ENCODE measurements at regions of chr6 and their contacts with region 1.

Region 1: GRCh38 chr6:32483968-32484636 is 44.4 kb downstream of the HLA-DRA start:
- DNase-seq: no peak
- H3K4me3 ChIP-seq: no peak overlapping the region
- H3K27ac ChIP-seq: no peak overlapping the region
- H3K4me1 ChIP-seq: no peaks in the 10 kb centered on the region
- H3K27me3 ChIP-seq: peaks cover 0 to 10% (median 0%) of the 10 kb centered on the region in 4 donors
- CTCF ChIP-seq: no peak
- EP300 ChIP-seq: no peak
- POLR2A ChIP-seq: no peak

Region 2: GRCh38 chr6:32226434-32226833 is 257.7 kb before region 1 on chr6:
- intact Hi-C with region 1: no loop called
- DNase-seq: no peak
- H3K4me3 ChIP-seq: no peak overlapping the region
- H3K27ac ChIP-seq: no peak overlapping the region
- H3K4me1 ChIP-seq: peaks cover 0 to 3% (median 0%) of the 10 kb centered on the region in 4 donors
- H3K27me3 ChIP-seq: no peaks in the 10 kb centered on the region
- CTCF ChIP-seq: no peak
- EP300 ChIP-seq: no peak
- POLR2A ChIP-seq: no peak

Region 3: DNA sequence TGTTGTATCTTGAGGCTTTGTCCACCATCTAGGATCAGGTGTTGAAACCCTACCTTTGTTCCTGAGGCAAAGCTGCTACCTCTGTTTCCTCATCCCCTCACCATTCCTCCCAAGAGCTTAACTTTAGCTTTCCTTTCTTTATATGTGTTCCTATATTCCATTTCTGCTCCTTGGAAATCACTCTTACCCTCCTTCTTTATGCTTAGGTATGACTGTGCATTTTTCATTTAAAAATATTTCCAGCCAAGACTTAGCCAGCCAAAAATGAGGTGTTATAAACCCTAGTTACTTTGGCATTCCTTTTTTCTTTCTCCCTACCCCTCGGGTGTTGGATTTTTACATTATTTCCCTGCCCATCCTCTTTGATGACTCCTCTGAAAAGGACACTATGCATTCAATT is 170.1 kb before region 1 on chr6:
- intact Hi-C with region 1: no loop called
- DNase-seq: no peak
- H3K4me3 ChIP-seq: no peak overlapping the region
- H3K27ac ChIP-seq: no peak overlapping the region
- H3K4me1 ChIP-seq: no peaks in the 10 kb centered on the region
- H3K27me3 ChIP-seq: no peaks in the 10 kb centered on the region
- CTCF ChIP-seq: no peak
- EP300 ChIP-seq: no peak
- POLR2A ChIP-seq: no peak

Region 4: GRCh38 chr6:32576250-32576649 is 92.1 kb after region 1 on chr6:
- intact Hi-C with region 1: loop called (anchors 10 kb)
- DNase-seq: no peak
- H3K4me3 ChIP-seq: no peak overlapping the region
- H3K27ac ChIP-seq: no peak overlapping the region
- H3K4me1 ChIP-seq: no peaks in the 10 kb centered on the region
- H3K27me3 ChIP-seq: no peaks in the 10 kb centered on the region
- CTCF ChIP-seq: no peak
- EP300 ChIP-seq: no peak
- POLR2A ChIP-seq: no peak

Region 5: DNA sequence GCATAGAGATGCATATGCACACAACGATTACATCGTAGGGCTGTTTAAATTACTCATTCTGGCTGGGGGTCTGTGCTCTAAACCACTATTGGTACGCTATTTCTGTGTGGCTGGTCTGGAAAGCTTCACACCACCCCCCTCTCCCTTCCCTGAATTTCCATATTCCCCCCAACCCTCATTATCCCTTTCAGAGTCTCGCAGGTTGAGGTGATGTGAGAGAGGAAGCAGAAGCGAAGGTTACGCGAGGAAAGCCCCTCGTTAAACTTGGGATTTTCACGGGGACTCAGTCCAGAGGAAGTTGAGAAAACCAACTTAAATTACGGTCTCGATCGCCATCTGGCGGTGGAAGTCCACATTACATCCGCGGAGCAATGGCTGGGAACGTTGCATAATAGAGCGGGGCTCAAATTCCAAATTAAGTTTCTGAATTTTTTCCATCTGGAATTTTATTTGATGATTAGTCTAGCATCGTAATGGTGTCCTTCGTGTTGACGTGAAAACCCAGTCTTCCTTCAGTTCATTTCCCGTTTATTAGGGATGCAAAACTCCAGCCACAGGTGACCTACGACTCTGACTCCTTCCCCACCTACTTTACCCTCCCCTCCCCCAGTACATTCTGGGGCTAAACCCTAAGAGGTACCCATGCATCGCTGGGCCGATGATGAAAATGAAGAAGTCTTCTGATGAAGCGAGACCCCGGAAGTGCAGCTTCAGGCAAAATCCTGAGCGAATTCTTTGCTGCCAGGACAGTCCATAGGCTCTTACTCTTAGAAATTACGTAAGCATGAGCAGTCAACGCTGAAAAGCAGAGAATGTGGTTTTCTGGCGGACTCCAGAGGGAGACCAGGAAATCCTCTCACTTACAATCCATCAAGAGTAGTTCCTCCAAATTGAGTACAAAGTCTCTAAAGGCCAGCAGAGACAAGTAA is 313.0 kb after region 1 on chr6:
- intact Hi-C with region 1: no loop called
- DNase-seq: peak; percentile 95
- H3K4me3 ChIP-seq: peak overlapping the region; percentile 5 to 39 (median 24)
- H3K27ac ChIP-seq: no peak overlapping the region
- H3K4me1 ChIP-seq: peaks cover 0 to 11% (median 9%) of the 10 kb centered on the region in 4 donors
- H3K27me3 ChIP-seq: peaks cover 0 to 74% (median 7%) of the 10 kb centered on the region in 4 donors
- CTCF ChIP-seq: peak; percentile 91 to 95 (median 94)
- EP300 ChIP-seq: no peak
- POLR2A ChIP-seq: no peak

Measured in esophagus muscularis mucosa (tissue), 4 donors.